HEK293 (cell line): ENCODE measurements at regions of chr1 and their contacts with region 1.

Region 1: DNA sequence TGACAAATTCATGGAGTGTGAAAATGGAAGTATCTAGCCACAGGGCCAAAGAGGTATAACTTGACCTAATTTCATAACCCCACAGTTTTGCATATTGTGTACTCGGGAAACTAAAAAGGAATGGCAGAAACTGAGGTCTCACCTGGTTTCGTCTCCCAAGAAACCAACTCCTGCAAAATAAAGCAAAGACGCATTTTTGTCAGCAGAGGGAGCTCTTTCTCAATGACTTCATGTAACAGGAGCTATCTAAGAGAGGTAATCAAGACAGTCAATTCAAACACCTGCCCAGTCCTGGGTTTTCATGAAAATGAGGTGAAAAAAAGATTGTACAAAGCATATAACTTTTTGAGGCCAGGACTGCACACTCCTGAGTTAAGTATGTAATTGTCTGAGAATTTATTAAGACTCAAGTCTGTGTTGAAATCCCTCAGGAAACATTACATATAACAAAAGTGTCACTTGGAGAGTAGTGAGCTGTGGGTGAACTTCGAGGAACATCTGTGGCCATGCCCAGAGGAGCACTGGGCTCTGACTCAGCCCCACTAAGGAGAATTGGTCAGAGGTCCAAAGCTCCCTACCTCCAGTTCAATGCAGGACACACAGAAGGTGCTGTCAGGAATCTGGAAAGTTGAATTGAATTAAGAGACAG is 17.6 kb downstream of the FCRL4 start:
- H3K4me3 ChIP-seq: no peak overlapping the region
- H3K27ac ChIP-seq: no peak overlapping the region
- H3K4me1 ChIP-seq: no peaks in the 10 kb centered on the region
- CTCF ChIP-seq: 0 out of 2 replicates have a peak, but pooled peaks have one; percentile 20

Region 2: DNA sequence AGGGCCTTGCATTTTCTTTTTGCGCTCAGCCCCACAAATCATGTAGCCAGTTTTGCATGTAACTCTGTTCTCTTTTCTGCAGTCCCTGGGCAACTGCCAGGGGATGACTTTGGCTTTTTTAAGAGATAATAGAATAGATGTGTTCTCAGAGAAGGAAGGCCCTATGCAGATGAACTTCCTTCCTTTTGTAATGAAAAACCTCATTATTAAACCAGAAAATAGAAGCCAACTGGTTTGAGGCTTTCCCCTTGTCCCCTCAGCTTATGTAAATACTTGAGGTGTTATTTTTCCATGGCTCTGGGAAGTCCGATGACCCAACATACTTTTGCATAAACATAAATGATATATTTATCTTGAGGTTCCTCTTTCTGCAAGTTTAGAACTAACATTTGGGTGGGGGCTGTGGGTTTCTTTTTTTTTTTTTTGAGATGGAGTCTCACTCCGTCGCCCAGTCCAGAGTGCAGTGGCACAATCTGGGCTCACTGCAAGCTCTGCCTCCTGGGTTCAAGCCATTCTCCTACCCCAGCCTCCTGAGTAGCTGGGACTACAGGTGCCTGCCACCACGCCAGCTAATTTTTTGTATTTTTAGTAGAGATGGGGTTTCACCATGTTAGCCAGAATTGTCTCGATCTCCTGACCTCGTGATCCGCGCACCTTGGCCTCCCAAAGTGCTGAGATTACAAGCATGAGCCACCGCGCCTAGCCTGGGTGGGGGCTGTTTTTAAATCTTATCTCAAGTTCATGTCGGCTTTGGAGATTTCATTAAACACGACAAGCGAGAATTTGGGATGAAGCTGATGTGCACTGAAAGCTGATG is 13.6 kb before region 1 on chr1:
- CTCF ChIA-PET with region 1: interaction called, 27 read pairs
- POLR2A ChIA-PET with region 1: interaction called, 3 read pairs
- H3K4me3 ChIP-seq: no peak overlapping the region
- H3K27ac ChIP-seq: no peak overlapping the region
- H3K4me1 ChIP-seq: no peaks in the 10 kb centered on the region
- CTCF ChIP-seq: no peak

Region 3: DNA sequence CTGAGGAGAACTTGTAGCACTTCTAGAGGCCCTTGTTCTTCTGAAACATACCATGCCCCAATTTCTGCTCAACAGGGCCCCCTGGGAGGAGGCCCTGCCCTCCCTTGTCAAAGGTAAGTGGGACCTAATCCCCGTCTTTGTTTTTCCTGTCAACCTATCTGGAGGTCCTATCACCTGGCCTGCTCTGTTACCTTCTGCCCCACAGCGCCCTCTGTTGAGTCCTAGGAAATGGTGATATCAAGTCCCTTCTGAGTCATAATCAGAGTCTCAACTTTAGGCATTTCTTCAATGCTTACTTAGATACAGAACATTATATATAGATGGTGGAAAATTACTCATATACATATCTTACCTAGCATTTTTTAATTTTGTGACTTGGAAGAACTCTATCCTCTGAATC is 45.8 kb after region 1 on chr1:
- CTCF ChIA-PET with region 1: interaction called, 11 read pairs
- POLR2A ChIA-PET with region 1: interaction called, 10 read pairs
- H3K4me3 ChIP-seq: no peak overlapping the region
- H3K27ac ChIP-seq: no peak overlapping the region
- H3K4me1 ChIP-seq: no peaks in the 10 kb centered on the region
- CTCF ChIP-seq: no peak

Region 4: GRCh38 chr1:157639800-157640199 is 59.5 kb after region 1 on chr1:
- CTCF ChIA-PET with region 1: no interaction called
- POLR2A ChIA-PET with region 1: no interaction called
- H3K4me3 ChIP-seq: no peak overlapping the region
- H3K27ac ChIP-seq: no peak overlapping the region
- H3K4me1 ChIP-seq: no peaks in the 10 kb centered on the region
- CTCF ChIP-seq: no peak

Region 5: DNA sequence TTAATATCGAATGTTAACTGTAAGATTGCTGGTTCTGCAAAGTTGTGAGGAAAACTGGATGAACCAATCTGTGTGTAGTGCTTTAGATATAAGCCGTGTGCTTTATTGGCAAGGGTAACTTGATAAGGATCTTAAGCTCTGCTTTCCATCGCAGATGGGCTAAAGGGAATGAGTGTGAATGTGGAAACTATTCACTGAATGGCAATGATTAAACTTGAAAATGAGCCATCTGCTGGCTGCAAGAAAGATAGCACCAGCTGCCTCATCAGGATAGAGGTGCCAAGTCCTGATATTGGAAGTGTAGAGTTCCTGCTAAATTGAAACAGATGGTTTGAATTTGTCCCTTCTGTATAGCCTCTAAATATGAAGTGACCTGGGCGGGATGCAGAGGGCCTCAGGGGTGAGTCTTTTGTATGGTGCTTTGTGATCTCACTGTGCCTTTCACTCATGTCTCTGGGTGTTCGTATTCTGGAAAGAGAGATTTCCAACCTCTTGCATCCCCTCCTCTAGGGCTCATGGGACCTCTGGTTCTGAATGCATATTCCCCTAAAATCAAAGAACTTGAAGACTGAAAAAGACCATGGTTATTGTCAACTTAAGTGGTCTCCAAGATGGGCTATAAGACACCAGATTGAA is 111.1 kb after region 1 on chr1:
- CTCF ChIA-PET with region 1: interaction called, 62 read pairs
- POLR2A ChIA-PET with region 1: no interaction called
- H3K4me3 ChIP-seq: no peak overlapping the region
- H3K27ac ChIP-seq: no peak overlapping the region
- H3K4me1 ChIP-seq: no peaks in the 10 kb centered on the region
- CTCF ChIP-seq: 0 out of 2 replicates have a peak, but pooled peaks have one; percentile 33

Region 6: GRCh38 chr1:157734321-157734720 is 154.0 kb after region 1 on chr1:
- CTCF ChIA-PET with region 1: interaction called, 11 read pairs
- POLR2A ChIA-PET with region 1: no interaction called
- H3K4me3 ChIP-seq: no peak overlapping the region
- H3K27ac ChIP-seq: no peak overlapping the region
- H3K4me1 ChIP-seq: no peaks in the 10 kb centered on the region
- CTCF ChIP-seq: no peak

Region 7: DNA sequence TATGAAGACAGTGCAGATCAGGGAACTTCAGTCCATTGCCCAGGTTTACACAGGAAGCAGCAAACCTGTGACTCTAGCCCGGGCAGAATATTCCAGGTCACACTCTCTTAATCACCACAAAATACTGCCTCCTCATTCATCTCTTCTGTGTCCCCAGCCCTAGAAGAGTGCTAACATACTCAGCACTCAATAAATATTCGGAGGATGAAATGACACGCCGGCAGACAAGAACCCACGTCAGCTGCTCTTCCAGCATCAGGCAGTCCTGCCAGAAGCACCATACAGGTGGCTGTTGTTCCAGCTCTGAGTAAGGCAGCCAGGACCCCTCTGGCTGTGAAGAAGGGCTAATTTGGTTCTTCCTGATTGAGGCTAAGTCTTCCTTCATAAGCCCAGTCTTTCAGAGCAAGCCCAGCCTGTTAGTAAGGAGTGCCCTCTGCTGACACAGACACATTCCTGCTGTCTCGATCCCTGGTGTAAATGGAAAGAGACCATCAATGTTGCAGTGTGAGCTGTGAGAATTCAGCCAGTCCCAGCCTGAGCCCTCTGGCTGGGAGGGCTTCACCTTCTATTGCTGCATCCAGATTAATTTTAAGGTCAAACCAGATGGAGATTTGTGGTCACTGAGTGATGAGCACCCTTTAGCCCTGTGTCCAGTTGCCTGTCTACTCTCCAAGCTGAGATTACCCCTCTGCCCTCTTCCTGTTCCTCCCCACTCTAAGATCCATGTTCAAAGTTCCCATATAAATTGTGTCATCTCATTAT is 368.2 kb after region 1 on chr1:
- CTCF ChIA-PET with region 1: interaction called, 20 read pairs
- POLR2A ChIA-PET with region 1: no interaction called
- H3K4me3 ChIP-seq: no peak overlapping the region
- H3K27ac ChIP-seq: no peak overlapping the region
- H3K4me1 ChIP-seq: no peaks in the 10 kb centered on the region
- CTCF ChIP-seq: peak; percentile 76